A549 (cell line): ENCODE measurements at regions of chr15 and their contacts with region 1.

Region 1: GRCh38 chr15:77959432-77959879 is 118.1 kb downstream of the TBC1D2B start:
- DNase-seq: peak; percentile 76 to 96
- ATAC-seq: peak; percentile 95 to 100
- H3K4me3 ChIP-seq: peak overlapping the region; percentile 20; the same call in 2 of the 3 replicates
- H3K27ac ChIP-seq: peak overlapping the region in 1 of 2 experiments; percentile 67; a peak in 3 of 6 replicates
- H3K4me1 ChIP-seq: no peaks in the 10 kb centered on the region
- CTCF ChIP-seq: peak; percentile 95
- EP300 ChIP-seq: no peak
- POLR2A ChIP-seq: no peak
- RAD21 ChIP-seq: peak; percentile 97 to 98

Region 2: DNA sequence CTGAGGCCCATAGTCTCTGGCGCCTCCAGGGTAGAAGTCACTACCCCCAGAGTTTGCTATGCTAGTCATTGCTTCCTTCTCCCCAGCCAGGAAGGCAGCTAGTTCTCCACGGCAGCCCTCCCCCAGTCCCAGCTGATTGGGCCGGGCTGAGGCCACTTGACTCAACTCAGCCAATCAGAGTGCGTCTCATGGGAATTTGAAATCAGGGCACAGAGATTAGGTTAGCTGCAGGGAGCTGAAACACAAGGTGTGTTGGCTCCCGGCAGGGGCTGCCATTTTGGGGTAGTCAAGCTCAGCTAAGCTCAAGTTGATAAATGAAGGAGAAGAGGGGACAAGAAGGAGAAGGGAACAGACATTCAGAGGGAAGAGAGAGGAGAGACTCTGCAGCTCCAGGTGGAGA is 359.6 kb before region 1 on chr15:
- CTCF ChIA-PET with region 1: no interaction called
- POLR2A ChIA-PET with region 1: no interaction called
- DNase-seq: peak; percentile 49 to 56
- ATAC-seq: peak in 1 of 2 experiments; percentile 74; a peak in 3 of 6 replicates
- H3K4me3 ChIP-seq: no peak overlapping the region
- H3K27ac ChIP-seq: no peak overlapping the region
- H3K4me1 ChIP-seq: no peaks in the 10 kb centered on the region
- CTCF ChIP-seq: no peak
- EP300 ChIP-seq: no peak
- POLR2A ChIP-seq: no peak
- RAD21 ChIP-seq: no peak

Region 3: DNA sequence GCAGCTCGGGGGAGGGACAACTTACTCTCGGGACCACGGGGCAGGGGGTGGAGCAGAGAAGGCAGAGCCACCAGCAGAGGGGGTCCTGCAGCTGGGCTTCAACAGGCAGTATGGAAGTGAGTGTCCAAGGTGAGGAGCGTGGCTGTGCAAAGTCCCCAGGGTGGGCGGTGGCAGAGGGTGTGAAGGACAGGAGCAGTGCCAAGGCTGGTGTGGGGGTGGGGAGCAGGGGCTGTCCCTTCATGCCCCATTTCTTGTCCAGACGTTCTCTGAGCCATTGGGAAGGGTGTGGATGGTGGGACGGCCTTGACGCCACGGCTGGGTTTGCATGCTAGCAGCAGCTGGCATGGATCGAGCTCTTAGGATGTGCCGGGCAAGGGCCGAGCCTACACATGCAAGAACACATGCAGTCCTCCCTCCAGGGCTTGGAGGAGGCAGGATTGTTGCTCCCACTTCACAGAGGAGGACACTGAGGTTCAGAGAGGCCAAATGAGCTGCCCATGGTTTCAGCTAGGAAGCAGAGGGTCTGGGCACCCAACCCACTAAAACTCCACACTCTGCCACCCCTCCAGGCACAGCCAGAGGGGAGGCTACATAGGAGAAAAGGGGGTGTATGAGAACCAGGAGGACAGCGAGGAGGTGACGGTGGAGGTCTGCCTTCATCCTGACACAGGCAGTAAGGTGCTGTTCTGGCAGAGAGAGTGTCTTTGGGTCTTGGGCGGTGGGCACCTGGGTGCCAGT is 24.4 kb after region 1 on chr15:
- CTCF ChIA-PET with region 1: interaction called, 10 read pairs
- POLR2A ChIA-PET with region 1: no interaction called
- DNase-seq: no peak
- ATAC-seq: no peak
- H3K4me3 ChIP-seq: no peak overlapping the region
- H3K27ac ChIP-seq: no peak overlapping the region; a peak in 1 of 6 replicates
- H3K4me1 ChIP-seq: no peaks in the 10 kb centered on the region
- CTCF ChIP-seq: no peak
- EP300 ChIP-seq: no peak
- POLR2A ChIP-seq: no peak
- RAD21 ChIP-seq: no peak

Region 4: GRCh38 chr15:78000091-78000926 is 40.9 kb after region 1 on chr15:
- CTCF ChIA-PET with region 1: interaction called, 76 read pairs
- POLR2A ChIA-PET with region 1: no interaction called
- DNase-seq: peak; percentile 86 to 92
- ATAC-seq: peak; percentile 88 to 98
- H3K4me3 ChIP-seq: no peak overlapping the region
- H3K27ac ChIP-seq: no peak overlapping the region
- H3K4me1 ChIP-seq: peaks cover 6% of the 10 kb centered on the region
- CTCF ChIP-seq: peak; percentile 90
- EP300 ChIP-seq: no peak
- POLR2A ChIP-seq: no peak
- RAD21 ChIP-seq: peak; percentile 98 to 99

Region 5: DNA sequence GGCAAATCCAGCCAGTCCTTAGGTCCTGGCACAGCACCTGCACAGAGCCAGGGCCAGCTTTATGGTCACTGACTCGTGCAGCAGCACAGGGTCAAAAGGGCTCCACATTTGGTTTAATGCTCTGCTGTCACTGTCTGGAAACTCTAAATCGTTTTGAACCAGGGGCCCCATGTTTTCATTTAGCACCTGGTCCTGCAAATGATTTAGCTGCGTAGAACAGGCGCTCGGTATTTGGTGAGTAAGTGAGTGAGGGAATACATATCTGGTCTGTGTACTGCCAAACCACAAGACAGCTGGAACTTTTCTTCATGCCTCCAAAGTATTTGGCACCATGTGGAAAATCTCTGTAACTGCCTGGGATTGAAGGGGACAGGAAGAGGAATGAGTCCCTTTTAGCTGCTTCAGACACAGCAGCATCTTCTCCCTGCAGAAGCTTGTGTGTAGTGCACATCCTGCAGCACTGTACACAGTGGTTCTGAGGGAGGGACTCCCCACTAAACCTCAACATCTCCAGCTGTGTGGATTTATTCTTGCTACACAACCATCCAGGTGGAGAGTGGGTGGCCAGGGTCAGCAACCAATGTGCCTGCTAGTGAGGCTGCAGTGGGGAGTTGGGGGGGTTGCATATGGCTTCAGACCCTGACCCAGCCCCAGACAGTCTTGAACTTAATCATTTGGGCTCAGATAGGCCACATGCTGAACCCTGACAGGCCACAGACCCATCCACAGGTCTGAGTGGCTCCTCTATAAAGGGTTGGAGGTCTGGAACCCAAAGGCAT is 134.0 kb after region 1 on chr15:
- CTCF ChIA-PET with region 1: interaction called, 10 read pairs
- POLR2A ChIA-PET with region 1: no interaction called
- DNase-seq: no peak
- ATAC-seq: peak in 1 of 2 experiments; percentile 24; a peak in 2 of 6 replicates
- H3K4me3 ChIP-seq: no peak overlapping the region
- H3K27ac ChIP-seq: no peak overlapping the region
- H3K4me1 ChIP-seq: 0 out of 3 replicates have a peak, but pooled peaks cover 3% of the 10 kb centered on the region
- CTCF ChIP-seq: no peak
- EP300 ChIP-seq: no peak
- POLR2A ChIP-seq: no peak
- RAD21 ChIP-seq: no peak

Region 6: DNA sequence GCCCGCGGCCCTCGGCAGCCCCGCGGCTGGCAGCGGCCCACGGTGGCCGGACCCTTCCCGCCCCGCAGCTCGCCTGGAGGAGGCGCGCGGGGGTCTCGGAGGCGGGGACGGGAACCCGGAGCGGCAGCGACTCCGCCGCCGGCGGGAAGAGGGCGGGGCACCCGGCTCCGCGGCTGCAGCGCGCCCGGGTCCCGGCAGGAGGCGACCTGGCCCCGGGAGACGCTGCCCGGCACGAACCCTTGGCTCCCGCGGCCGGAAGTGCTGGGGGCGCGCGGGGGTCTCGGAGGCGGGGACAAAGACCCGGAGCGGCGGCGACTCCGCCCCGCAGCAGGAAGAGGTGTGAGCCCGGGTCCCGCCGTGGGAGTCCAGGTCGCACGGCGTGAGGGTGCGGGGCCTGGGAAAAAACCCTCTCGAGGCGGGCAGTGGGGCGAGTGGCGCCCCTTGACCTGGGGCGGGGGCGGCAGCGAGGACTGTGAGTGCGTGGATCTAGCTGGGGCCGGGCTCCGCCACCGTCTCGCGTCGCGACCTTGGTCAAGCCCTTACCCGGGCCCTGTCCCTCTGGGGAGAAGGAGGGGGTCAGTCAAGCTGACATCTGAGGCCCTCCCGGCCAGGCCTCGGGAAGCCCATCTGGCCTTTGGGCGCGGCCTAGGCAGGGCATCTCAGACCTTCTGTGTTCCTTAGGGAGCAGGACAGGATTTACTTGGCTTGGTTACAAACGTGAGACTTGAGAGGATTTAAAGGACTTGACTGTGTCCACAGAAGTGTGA is 172.0 kb after region 1 on chr15 and contains the start of gene CIB2:
- CTCF ChIA-PET with region 1: interaction called, 14 read pairs
- POLR2A ChIA-PET with region 1: no interaction called
- DNase-seq: peak; percentile 71 to 92
- ATAC-seq: peak; percentile 84 to 87
- H3K4me3 ChIP-seq: peak within 1 kb of the TSS; percentile 86
- H3K27ac ChIP-seq: peak within 1 kb of the TSS; percentile 91 to 94
- H3K4me1 ChIP-seq: peaks cover 38% of the 10 kb centered on the region
- CTCF ChIP-seq: peak; percentile 85
- EP300 ChIP-seq: no peak
- POLR2A ChIP-seq: peak; percentile 74
- RAD21 ChIP-seq: peak; percentile 61 to 81
- polyA plus RNA-seq, gene CIB2: 16.4 and 21.2 TPM in 2 replicates

Region 7: GRCh38 chr15:78225783-78226541 is 266.5 kb after region 1 on chr15:
- CTCF ChIA-PET with region 1: interaction called, 10 read pairs
- POLR2A ChIA-PET with region 1: no interaction called
- DNase-seq: no peak
- ATAC-seq: no peak
- H3K4me3 ChIP-seq: no peak overlapping the region
- H3K27ac ChIP-seq: no peak overlapping the region
- H3K4me1 ChIP-seq: no peaks in the 10 kb centered on the region
- CTCF ChIP-seq: no peak
- EP300 ChIP-seq: no peak
- POLR2A ChIP-seq: no peak
- RAD21 ChIP-seq: no peak